ENCODE measurements at regions of chr2 and their contacts with region 1.

Region 1: GRCh38 chr2:161250864-161251436 is 57.3 kb upstream of the PSMD14 start:
- DNase-seq: peak; percentile 69
- ATAC-seq: peak; percentile 91
- H3K4me3 ChIP-seq: no peak overlapping the region
- H3K27ac ChIP-seq: no peak overlapping the region
- H3K4me1 ChIP-seq: peaks cover under 1 to 6% of the 10 kb centered on the region in 2 experiments; a peak in 2 of 4 replicates
- H3K27me3 ChIP-seq: no peaks in the 10 kb centered on the region
- CTCF ChIP-seq: peak; percentile 61 to 78 (median 71)
- POLR2A ChIP-seq: no peak
- RAD21 ChIP-seq: peak; percentile 70

Region 2: GRCh38 chr2:161265874-161266273 is 14.9 kb after region 1 on chr2:
- CTCF ChIA-PET with region 1: interaction called, 12 read pairs
- POLR2A ChIA-PET with region 1: no interaction called
- RAD21 ChIA-PET with region 1: no interaction called
- intact Hi-C with region 1: no loop called
- DNase-seq: no peak
- ATAC-seq: no peak
- H3K4me3 ChIP-seq: no peak overlapping the region
- H3K27ac ChIP-seq: no peak overlapping the region
- H3K4me1 ChIP-seq: no peaks in the 10 kb centered on the region
- H3K27me3 ChIP-seq: no peaks in the 10 kb centered on the region
- CTCF ChIP-seq: no peak
- POLR2A ChIP-seq: no peak
- RAD21 ChIP-seq: no peak

Region 3: GRCh38 chr2:161556440-161556839 is 305.5 kb after region 1 on chr2:
- CTCF ChIA-PET with region 1: no interaction called
- POLR2A ChIA-PET with region 1: no interaction called
- RAD21 ChIA-PET with region 1: no interaction called
- intact Hi-C with region 1: loop called (anchors 2 kb)
- DNase-seq: no peak
- ATAC-seq: 0 out of 2 replicates have a peak, but pooled peaks have one; percentile 42
- H3K4me3 ChIP-seq: no peak overlapping the region
- H3K27ac ChIP-seq: no peak overlapping the region
- H3K4me1 ChIP-seq: no peaks in the 10 kb centered on the region
- H3K27me3 ChIP-seq: no peaks in the 10 kb centered on the region
- CTCF ChIP-seq: peak; percentile 3 to 35 (median 18); a peak in 2 of 6 replicates
- POLR2A ChIP-seq: no peak
- RAD21 ChIP-seq: no peak

Measured in HCT116 (cell line).